Heart right ventricle (tissue), 16 donors: ENCODE measurements at regions of chr1 and their contacts with region 1.

Region 1: GRCh38 chr1:117534995-117535467 is 70.8 kb upstream of the TENT5C start:
- DNase-seq: peak in 1 of 2 donors; percentile 18
- ATAC-seq: peak; percentile 76 to 92 (median 87)
- H3K4me3 ChIP-seq: no peak overlapping the region
- H3K27ac ChIP-seq: no peak overlapping the region
- H3K4me1 ChIP-seq: peaks cover 0 to 8% (median 0%) of the 10 kb centered on the region in 9 donors
- H3K27me3 ChIP-seq: no peaks in the 10 kb centered on the region
- CTCF ChIP-seq: peak; percentile 31 to 74 (median 66)

Region 2: DNA sequence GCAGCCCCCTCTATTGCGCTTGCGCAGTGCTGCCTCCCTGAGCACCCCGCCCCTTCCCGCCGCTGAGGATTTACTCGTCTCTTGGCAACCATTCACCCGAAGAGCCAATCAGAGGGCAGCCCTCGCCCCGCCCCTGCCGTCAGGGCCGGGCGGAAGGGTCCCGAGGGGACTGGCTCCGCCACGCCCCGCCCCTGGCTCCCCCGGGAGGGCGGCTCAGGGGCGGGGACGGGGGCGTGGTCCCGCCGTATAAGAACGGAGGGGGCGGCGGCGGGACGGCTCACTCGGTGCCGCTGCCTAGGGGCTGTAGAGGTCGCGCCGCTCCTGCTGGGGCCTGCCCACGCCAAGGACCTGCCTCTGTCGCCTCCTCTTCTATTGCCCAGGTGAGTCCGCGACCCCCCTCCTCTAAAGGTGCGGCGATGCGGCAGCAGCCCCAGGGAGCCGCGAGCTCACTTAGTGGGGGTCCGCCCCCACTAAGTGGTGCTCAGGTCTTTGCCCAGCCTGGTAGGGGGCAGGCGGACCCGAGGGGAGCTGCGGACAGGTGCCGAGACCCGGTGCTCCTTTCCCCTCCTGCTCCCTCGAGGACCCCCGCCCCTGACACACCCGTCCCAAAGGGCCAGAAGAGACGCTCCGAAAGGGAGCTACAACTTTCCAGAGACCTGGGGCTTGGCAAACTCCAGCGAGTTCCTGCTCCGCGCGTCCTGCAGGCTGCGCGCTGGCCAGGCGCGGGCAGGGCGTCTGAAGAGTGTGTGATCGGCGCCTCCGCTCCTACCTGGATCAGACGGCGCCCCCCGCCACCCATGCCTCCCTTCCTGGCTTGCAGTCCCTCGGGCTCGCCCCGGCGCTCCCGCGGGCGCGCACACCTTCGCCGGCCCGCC is 71.0 kb after region 1 on chr1 and contains the start of gene TENT5C:
- intact Hi-C with region 1: loop called in 1 of 10 experiments (anchors 5 kb)
- DNase-seq: peak; percentile 97
- ATAC-seq: peak; percentile 96 to 99 (median 97)
- H3K4me3 ChIP-seq: peak within 1 kb of the TSS; percentile 57 to 94 (median 82)
- H3K27ac ChIP-seq: peak within 1 kb of the TSS in 9 of 10 donors; percentile 70 to 90 (median 82)
- H3K4me1 ChIP-seq: peaks cover 6 to 52% (median 30%) of the 10 kb centered on the region in 9 donors
- H3K27me3 ChIP-seq: peaks cover 0 to 4% (median 0%) of the 10 kb centered on the region in 7 donors
- CTCF ChIP-seq: no peak
- total RNA-seq, gene TENT5C: 3.1 to 23.1 (median 13.0) TPM

Region 3: DNA sequence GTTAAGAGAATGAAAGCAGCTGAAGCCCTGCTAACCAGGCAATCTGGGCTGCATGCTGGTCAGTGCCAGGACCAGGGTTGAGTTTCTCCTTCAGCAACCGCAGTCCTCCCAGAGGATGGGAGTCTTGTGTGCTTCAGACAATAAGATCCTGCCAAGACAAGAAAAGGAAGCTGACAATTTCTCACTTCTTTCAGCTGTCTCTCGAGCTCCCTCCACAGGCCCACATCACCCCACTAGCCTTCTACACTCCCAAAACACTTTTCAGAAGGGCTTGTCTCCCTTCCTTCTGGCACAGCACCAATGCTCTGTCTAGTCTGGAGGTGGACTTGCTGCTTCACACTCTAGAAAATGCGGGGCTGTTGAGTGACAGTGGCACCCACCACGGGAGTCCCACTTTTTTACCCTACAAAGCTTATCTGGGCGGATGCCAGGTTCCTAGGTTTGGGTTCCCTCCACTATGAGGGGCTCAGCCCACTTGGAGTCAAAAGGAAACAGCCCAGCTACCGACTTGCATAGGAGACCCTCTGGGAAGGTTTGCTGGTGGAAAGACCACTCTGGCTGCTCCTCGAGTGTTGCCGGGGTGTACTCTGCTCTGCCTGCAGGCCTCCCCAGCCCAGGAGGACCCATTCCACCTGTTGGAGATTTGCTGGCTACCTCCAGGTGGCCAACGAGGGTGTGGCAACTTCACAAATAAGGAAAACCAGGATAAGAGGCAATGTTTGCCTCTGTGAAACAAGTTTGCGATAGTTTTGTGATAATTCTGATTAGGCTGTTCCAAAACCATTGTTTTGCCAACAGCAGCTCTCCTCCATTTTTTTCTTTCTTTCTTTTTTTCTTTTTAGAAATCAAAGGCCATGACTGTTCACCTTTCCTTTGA is 139.7 kb after region 1 on chr1:
- intact Hi-C with region 1: loop called in 4 of 10 experiments (anchors 2 to 5 kb)
- DNase-seq: no peak
- ATAC-seq: no peak
- H3K4me3 ChIP-seq: no peak overlapping the region
- H3K27ac ChIP-seq: peak overlapping the region in 4 of 10 donors; percentile 47 to 88 (median 66)
- H3K4me1 ChIP-seq: peaks cover 8 to 81% (median 41%) of the 10 kb centered on the region in 9 donors
- H3K27me3 ChIP-seq: no peaks in the 10 kb centered on the region
- CTCF ChIP-seq: peak in 4 of 9 donors; percentile 21 to 49 (median 35)

Region 4: DNA sequence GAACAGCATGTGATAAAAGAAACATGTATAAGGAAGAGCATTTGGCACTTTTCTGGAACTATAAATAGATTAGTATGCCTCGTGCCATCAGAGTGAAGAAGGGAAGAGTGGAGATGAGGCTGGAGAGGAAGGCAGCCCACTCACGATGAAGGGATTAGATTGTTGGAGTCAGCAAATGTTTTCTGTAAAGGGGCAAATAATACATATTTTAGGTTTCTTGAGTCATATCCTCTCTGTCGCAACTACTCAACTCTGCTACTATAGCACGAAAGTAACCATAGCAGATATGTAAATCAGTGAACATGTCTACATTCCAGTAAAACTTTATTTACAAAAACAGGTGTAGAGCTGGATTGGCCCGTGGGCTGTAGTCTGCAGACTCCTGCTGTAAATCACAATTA is 218.6 kb after region 1 on chr1:
- intact Hi-C with region 1: loop called (anchors 1 to 5 kb)
- DNase-seq: no peak
- ATAC-seq: peak in 3 of 8 donors; percentile 12 to 32 (median 15)
- H3K4me3 ChIP-seq: peak overlapping the region in 5 of 10 donors; percentile 14 to 39 (median 30)
- H3K27ac ChIP-seq: no peak overlapping the region
- H3K4me1 ChIP-seq: peaks cover 0 to 16% (median 3%) of the 10 kb centered on the region in 9 donors
- H3K27me3 ChIP-seq: no peaks in the 10 kb centered on the region
- CTCF ChIP-seq: no peak

Region 5: DNA sequence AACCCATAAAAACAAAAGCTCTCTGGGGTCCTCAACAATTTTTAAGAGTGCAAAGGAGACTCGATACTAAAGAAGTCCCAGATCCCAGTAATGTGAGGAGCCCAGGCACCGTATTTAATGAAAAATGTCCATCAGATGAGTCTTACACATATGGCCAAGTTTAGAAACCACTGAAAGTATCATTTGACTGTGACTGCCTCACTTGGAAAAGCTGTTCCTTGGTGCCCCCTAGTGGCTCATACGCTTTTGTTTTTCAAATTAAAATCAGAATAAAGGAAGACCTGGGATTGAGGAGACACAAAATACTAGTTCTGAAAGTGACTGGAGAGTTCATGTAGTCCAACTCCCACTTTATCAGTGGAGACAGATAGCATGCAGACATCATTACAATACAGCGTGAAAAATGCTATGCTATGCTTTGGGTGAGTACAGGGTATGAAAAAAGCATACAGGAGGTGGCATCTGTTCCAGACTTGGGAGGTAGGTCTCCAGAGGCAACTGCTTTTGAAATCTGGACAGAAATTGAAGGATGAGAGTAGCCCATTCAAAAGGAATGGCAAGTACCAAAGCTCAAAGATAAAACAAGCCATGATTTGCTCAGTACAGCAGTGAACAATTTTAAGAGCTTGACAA is 360.6 kb after region 1 on chr1:
- intact Hi-C with region 1: loop called in 1 of 10 experiments (anchors 10 kb)
- DNase-seq: peak in 1 of 2 donors; percentile 56
- ATAC-seq: peak in 4 of 8 donors; percentile 42 to 63 (median 48)
- H3K4me3 ChIP-seq: no peak overlapping the region
- H3K27ac ChIP-seq: no peak overlapping the region
- H3K4me1 ChIP-seq: peaks cover 0 to 7% (median 0%) of the 10 kb centered on the region in 9 donors
- H3K27me3 ChIP-seq: no peaks in the 10 kb centered on the region
- CTCF ChIP-seq: peak; percentile 51 to 84 (median 80)